Posterior vena cava (tissue), 2 donors: ENCODE measurements at regions of chr7 and their contacts with region 1.

Region 1: DNA sequence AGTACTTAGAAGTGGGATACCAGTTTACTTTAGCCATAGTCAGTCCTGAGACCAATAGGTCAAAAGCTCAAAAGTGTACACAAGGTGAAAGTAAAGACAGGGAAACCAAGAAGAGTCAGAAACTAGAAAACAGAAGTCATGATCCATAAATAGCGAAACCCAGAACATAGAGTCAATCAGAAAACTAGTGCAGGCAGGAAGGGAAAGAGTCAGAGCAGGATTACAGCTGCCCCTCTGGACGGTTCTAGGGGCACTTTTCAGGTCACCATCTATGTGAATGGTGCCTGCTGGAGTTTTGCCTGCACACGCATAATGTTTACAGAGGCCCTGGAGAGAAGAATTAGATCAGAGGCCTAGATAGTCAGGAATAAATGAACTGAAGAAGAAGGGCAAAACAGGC is 22.4 kb upstream of the DMTF1 start:
- DNase-seq: no peak

Region 2: GRCh38 chr7:87075671-87076404 is 54.0 kb before region 1 on chr7:
- intact Hi-C with region 1: loop called in 1 of 2 experiments (anchors 10 kb)
- DNase-seq: no peak